ENCODE measurements at regions of chrX and their contacts with region 1.

Region 1: GRCh38 chrX:120477453-120477852 is 8.4 kb upstream of the LAMP2 start:
- DNase-seq: no peak
- H3K4me3 Mint-ChIP-seq: no peak overlapping the region
- H3K27ac Mint-ChIP-seq: no peak overlapping the region
- H3K4me1 Mint-ChIP-seq: no peaks in the 10 kb centered on the region
- H3K27me3 Mint-ChIP-seq: no peaks in the 10 kb centered on the region

Region 2: GRCh38 chrX:120365320-120365719 is 112.1 kb before region 1 on chrX:
- CTCF ChIA-PET with region 1: interaction called, 10 read pairs
- POLR2A ChIA-PET with region 1: no interaction called
- intact Hi-C with region 1: loop called (anchors 10 kb)
- DNase-seq: peak; percentile 58
- H3K4me3 Mint-ChIP-seq: no peak overlapping the region
- H3K27ac Mint-ChIP-seq: no peak overlapping the region
- H3K4me1 Mint-ChIP-seq: peaks cover 2% of the 10 kb centered on the region
- H3K27me3 Mint-ChIP-seq: no peaks in the 10 kb centered on the region

Region 3: GRCh38 chrX:120380699-120381098 is 96.8 kb before region 1 on chrX:
- CTCF ChIA-PET with region 1: interaction called, 3 read pairs
- POLR2A ChIA-PET with region 1: no interaction called
- intact Hi-C with region 1: loop called (anchors 1 kb)
- DNase-seq: peak; percentile 24
- H3K4me3 Mint-ChIP-seq: no peak overlapping the region
- H3K27ac Mint-ChIP-seq: no peak overlapping the region
- H3K4me1 Mint-ChIP-seq: peaks cover 5% of the 10 kb centered on the region
- H3K27me3 Mint-ChIP-seq: peaks cover 1% of the 10 kb centered on the region

Region 4: GRCh38 chrX:120452131-120452530 is 25.3 kb before region 1 on chrX:
- CTCF ChIA-PET with region 1: no interaction called
- POLR2A ChIA-PET with region 1: no interaction called
- intact Hi-C with region 1: no loop called
- DNase-seq: no peak
- H3K4me3 Mint-ChIP-seq: no peak overlapping the region
- H3K27ac Mint-ChIP-seq: no peak overlapping the region
- H3K4me1 Mint-ChIP-seq: peaks cover 10% of the 10 kb centered on the region
- H3K27me3 Mint-ChIP-seq: no peaks in the 10 kb centered on the region

Region 5: DNA sequence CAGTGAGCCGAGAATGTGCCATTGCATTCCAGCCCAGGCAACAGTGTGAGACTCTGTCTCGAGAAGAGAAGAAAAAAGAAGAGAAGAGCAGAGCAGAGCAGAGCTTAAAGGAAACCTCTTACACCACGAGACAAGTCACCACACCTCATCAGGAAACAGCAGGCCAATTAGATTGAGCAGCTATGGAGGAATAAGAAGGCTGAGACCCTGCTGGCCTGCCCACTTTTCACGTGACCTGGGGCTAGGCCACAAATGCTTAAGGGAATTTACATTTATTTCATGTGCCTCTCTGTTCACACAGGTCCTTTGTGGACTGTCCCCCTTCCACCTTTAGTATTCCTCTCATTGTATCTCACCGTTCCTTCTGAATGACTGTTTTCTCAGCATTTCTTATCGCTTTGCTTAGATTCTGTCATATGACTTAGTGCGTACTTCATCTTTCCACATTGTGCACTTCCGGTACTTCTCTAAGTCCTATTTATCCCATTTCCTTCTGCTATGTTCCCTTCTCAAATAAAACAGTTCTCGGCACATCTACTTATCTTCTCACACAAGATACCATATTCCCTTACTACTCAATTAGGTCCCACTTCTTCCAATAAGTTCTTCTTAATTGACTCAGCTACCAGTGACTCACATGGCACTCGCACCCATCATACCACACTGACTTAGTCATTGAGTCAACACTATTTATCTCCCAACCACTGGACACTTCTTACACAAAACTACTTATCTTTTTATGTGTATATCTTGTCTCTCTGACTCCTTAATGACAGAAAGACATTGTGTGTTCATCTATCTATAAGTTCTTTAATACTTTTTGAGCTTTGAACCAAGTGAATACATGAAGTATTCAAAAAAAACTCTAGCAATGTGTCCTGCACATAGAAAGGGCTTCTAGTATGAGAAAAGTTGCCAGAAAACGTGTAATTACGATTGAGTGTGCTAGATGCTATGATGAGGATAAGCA is 72.3 kb after region 1 on chrX:
- CTCF ChIA-PET with region 1: no interaction called
- POLR2A ChIA-PET with region 1: no interaction called
- intact Hi-C with region 1: no loop called
- DNase-seq: peak; percentile 52
- H3K4me3 Mint-ChIP-seq: no peak overlapping the region
- H3K27ac Mint-ChIP-seq: peak overlapping the region; percentile 52
- H3K4me1 Mint-ChIP-seq: peaks cover 19% of the 10 kb centered on the region
- H3K27me3 Mint-ChIP-seq: no peaks in the 10 kb centered on the region

Region 6: DNA sequence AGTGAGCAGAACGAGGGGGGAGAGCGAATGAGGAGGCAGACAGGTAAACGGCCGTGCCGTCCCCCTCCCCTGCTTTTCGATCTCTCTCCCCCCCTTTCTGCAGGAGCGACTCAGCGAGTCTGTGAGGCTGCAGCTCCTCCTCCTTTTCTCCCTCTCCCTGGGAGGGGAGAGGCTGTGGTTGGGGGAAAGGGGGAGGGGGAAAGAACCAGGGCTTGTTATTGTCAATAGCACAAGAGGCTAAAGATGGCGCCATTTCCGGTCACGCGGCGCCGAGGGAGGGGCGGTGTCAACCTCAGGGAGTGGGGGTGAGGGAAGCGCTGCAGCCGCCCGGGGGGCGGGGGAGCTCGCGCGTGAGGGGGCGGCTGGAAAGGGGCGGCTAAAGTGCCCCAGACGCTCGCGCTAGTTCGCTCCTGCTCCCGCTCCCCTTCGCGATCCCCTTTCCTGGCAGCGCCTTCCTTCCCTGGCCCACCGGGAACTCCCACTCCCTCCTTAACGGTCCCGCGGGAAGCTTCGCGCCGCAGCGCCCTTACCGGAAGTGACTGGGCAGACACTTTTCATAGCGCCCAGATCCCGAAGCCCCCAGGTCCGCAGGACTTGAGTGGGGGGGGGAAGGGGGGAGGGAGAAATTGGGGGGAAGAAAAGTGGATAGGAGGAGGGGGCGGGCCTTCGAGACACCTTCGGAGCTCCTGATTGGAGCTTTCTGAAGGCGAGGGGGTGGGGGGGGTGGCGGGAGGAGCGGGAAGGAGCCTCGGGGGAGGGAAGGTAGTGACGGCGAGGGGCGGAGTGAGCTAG is 83.6 kb after region 1 on chrX and contains the start of gene CUL4B:
- CTCF ChIA-PET with region 1: no interaction called
- POLR2A ChIA-PET with region 1: no interaction called
- intact Hi-C with region 1: no loop called
- DNase-seq: peak; percentile 95
- H3K4me3 Mint-ChIP-seq: peak within 1 kb of the TSS; percentile 95
- H3K27ac Mint-ChIP-seq: peak within 1 kb of the TSS; percentile 95
- H3K4me1 Mint-ChIP-seq: peaks cover 24% of the 10 kb centered on the region
- H3K27me3 Mint-ChIP-seq: no peaks in the 10 kb centered on the region
- total RNA-seq, gene CUL4B: 39.4 to 40.2 TPM

Region 7: DNA sequence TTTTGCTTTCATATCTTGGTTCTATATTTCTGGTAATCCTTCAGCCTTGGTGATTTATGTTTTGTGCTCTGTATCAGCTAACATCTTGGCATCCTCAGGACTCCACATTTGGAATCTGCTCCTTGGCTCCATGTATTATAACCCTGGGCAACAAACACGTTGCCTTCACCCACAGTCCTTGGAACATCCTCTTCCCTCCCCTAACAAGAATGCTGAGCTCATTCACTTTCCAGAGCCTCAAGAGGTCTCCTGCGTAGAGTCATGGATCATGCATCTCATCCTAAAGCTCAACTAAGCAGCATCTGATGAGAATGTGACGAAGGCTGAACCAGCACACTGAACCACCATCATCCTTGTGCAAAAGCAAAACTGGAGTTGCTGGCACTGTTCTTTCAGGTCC is 212.9 kb after region 1 on chrX:
- CTCF ChIA-PET with region 1: no interaction called
- POLR2A ChIA-PET with region 1: no interaction called
- intact Hi-C with region 1: no loop called
- DNase-seq: no peak
- H3K4me3 Mint-ChIP-seq: no peak overlapping the region
- H3K27ac Mint-ChIP-seq: no peak overlapping the region
- H3K4me1 Mint-ChIP-seq: peaks cover 8% of the 10 kb centered on the region
- H3K27me3 Mint-ChIP-seq: no peaks in the 10 kb centered on the region